Activated B cell treated with CpG ODN at 0.5 μM for 24 hours (primary cell): ENCODE measurements at regions of chr2 and their contacts with region 1.

Region 1: GRCh38 chr2:99926986-99927385 is 215.4 kb downstream of the AFF3 start:
- DNase-seq: no peak
- ATAC-seq: no peak
- H3K4me3 Mint-ChIP-seq: no peak overlapping the region
- H3K27ac Mint-ChIP-seq: peak overlapping the region; percentile 91
- H3K4me1 Mint-ChIP-seq: peaks cover 85% of the 10 kb centered on the region
- H3K27me3 Mint-ChIP-seq: no peaks in the 10 kb centered on the region
- CTCF ChIP-seq: no peak

Region 2: DNA sequence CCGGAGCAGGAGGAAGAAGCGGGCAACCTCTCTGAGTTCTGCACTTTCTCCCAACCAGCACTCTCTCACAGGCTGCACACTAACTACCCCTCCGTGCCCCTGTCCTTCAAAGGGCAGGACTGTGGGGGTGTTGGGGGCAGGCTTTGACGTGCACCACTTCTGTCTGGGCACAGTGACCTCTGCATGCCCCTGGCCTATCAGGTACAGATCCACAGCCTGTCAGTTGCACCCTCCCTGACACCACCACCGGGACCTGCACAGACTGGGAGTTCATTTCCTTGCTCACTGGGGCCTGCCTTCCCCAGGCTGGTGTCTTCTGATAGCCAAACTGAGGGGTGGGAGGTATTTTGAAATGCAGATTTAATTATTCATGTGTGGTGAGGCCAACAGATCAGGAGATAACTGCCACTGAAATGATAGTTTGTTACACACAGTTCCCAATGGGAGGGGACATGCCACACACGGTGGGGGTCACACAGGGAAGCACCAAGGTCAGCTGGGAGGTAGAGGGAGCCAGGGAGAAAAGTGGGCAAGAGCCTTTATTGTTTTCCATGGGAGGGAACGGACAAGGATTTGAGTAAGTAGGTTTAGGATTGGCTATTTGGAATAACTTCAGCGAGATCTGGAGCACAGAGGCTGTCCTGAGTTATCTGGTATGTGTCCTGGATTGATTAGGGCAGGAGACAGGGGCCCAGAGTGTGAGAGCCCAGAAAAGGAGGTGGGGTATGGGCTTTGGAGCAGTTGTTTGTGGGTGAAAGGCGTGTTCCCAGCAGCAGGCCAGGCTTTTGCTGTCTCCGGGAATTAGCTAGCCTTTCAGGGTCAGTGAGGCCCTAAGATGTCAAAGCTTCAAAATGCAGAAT is 36.2 kb before region 1 on chr2:
- CTCF ChIA-PET with region 1: no interaction called
- POLR2A ChIA-PET with region 1: no interaction called
- intact Hi-C with region 1: no loop called
- DNase-seq: no peak
- ATAC-seq: no peak
- H3K4me3 Mint-ChIP-seq: no peak overlapping the region
- H3K27ac Mint-ChIP-seq: no peak overlapping the region
- H3K4me1 Mint-ChIP-seq: peaks cover 3% of the 10 kb centered on the region
- H3K27me3 Mint-ChIP-seq: no peaks in the 10 kb centered on the region
- CTCF ChIP-seq: no peak

Region 3: DNA sequence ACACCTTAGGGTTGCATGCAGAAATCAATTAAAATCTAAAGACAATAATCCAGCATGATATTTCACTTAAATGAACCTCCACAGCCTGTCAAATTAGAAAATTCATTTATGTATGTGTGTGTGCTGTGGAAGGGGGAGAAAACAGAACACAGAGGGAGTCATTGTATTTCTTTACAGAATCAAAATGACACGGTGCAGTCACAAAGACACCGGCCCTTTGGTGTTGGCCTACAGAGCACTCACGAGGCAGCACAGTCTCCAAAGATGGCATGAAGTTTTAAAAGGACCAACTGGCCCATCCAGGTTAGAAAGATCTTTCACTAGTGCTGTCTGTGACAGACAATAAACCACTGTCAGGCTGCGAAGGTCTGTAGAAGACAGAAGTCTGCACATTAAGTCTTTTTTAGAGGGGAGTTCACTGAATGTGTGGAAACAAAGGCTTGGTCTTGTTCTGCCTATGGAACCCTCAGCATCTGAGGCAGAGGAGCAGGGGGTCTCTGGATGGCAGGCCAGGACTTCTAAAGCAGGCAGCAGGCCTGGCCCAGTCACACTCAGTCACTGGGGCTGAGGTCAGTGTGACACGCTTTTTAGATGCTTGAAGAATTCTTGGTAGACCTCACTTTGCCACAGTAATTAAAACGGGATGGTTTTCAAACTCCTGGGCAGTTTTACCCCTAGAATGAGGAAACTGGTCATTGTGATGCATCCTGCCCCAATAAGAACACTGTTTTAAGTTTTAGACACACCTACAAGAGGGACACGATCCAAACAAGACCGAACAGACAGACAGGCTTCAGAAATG is 30.5 kb after region 1 on chr2:
- CTCF ChIA-PET with region 1: no interaction called
- POLR2A ChIA-PET with region 1: no interaction called
- intact Hi-C with region 1: loop called (anchors 5 kb)
- DNase-seq: no peak
- ATAC-seq: no peak
- H3K4me3 Mint-ChIP-seq: no peak overlapping the region
- H3K27ac Mint-ChIP-seq: no peak overlapping the region
- H3K4me1 Mint-ChIP-seq: peaks cover 41% of the 10 kb centered on the region
- H3K27me3 Mint-ChIP-seq: no peaks in the 10 kb centered on the region
- CTCF ChIP-seq: no peak